Esophagus muscularis mucosa (tissue), 4 donors: ENCODE measurements at regions of chr2 and their contacts with region 1.

Region 1: DNA sequence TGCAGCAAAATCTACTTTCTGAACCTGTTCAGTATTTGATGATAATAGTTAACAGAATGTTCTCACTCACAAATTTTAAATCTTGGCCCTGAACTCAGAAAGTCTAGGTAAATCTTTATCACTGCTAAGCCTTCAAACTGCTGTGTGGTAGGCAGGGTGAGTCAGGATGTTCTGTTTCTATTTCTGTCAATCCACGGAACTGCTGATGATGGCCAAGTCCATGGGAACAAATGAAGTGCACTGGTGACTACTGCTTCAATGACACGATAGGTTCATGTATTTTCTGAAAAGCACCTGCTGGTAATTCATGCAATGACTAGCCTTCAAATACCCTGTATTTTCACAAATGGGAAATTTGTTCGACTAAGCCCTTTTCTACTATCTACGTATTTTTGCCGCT is 14.2 kb downstream of the NIFK start:
- DNase-seq: no peak
- H3K4me3 ChIP-seq: no peak overlapping the region
- H3K27ac ChIP-seq: no peak overlapping the region
- H3K4me1 ChIP-seq: peaks cover 2 to 10% (median 8%) of the 10 kb centered on the region in 4 donors
- H3K27me3 ChIP-seq: no peaks in the 10 kb centered on the region
- CTCF ChIP-seq: no peak
- EP300 ChIP-seq: no peak
- POLR2A ChIP-seq: no peak

Region 2: DNA sequence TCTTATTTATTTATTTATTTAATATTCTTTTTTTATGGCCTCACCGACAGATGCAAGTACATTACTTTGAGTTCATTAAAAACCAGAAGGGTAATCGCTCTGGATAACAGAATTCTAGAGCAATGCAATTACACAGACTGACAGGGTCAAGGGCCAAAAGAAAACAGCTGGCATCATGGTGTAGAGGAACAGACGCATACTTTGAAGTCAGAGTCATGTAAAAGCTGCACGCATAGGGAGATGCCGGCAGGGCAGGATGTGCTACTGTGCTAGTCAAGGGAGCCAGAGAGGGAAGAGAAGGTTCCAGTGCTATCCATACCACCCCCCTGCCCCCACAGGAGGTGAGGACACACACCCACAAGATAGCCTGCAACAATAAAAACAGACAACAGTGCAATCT is 322.3 kb before region 1 on chr2:
- intact Hi-C with region 1: loop called (anchors 2 kb)
- DNase-seq: no peak
- H3K4me3 ChIP-seq: no peak overlapping the region
- H3K27ac ChIP-seq: no peak overlapping the region
- H3K4me1 ChIP-seq: no peaks in the 10 kb centered on the region
- H3K27me3 ChIP-seq: no peaks in the 10 kb centered on the region
- CTCF ChIP-seq: no peak
- EP300 ChIP-seq: no peak
- POLR2A ChIP-seq: no peak

Region 3: DNA sequence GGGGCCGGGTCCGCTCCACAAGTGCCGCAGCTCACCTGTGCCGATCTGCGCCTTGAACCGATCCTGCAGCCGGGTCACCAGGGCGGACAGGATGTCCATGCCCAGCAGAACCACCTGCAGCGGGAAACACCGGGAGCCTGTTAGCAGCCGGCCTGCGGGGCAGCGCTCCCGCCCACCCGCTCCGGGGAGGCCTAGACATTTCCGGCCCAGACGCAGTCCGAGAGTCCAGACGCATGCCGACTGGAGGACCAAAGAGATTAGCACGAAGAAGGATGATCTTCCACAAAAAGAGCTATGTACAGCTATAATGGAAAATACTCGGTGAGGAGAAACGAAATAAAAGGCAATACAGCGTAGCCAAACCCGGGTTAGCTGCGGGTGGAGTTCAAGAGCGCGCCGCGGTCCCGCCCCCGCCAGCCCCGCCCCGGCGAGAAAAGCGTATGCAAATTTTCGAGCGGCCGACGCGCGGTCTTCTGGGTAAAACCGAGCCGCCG is 192.2 kb before region 1 on chr2:
- intact Hi-C with region 1: loop called (anchors 5 kb)
- DNase-seq: peak; percentile 97
- H3K4me3 ChIP-seq: peak overlapping the region; percentile 69 to 86 (median 79)
- H3K27ac ChIP-seq: peak overlapping the region; percentile 91 to 95 (median 94)
- H3K4me1 ChIP-seq: peaks cover 48 to 76% (median 67%) of the 10 kb centered on the region in 4 donors
- H3K27me3 ChIP-seq: no peaks in the 10 kb centered on the region
- CTCF ChIP-seq: no peak
- EP300 ChIP-seq: no peak
- POLR2A ChIP-seq: no peak

Region 4: GRCh38 chr2:121596221-121597080 is 126.0 kb before region 1 on chr2:
- intact Hi-C with region 1: loop called (anchors 5 kb)
- DNase-seq: no peak
- H3K4me3 ChIP-seq: peak overlapping the region in 3 of 4 donors; percentile 15 to 35 (median 25)
- H3K27ac ChIP-seq: peak overlapping the region; percentile 41 to 65 (median 54)
- H3K4me1 ChIP-seq: peaks cover 19 to 36% (median 33%) of the 10 kb centered on the region in 4 donors
- H3K27me3 ChIP-seq: no peaks in the 10 kb centered on the region
- CTCF ChIP-seq: peak; percentile 35 to 49 (median 40)
- EP300 ChIP-seq: no peak
- POLR2A ChIP-seq: no peak

Region 5: DNA sequence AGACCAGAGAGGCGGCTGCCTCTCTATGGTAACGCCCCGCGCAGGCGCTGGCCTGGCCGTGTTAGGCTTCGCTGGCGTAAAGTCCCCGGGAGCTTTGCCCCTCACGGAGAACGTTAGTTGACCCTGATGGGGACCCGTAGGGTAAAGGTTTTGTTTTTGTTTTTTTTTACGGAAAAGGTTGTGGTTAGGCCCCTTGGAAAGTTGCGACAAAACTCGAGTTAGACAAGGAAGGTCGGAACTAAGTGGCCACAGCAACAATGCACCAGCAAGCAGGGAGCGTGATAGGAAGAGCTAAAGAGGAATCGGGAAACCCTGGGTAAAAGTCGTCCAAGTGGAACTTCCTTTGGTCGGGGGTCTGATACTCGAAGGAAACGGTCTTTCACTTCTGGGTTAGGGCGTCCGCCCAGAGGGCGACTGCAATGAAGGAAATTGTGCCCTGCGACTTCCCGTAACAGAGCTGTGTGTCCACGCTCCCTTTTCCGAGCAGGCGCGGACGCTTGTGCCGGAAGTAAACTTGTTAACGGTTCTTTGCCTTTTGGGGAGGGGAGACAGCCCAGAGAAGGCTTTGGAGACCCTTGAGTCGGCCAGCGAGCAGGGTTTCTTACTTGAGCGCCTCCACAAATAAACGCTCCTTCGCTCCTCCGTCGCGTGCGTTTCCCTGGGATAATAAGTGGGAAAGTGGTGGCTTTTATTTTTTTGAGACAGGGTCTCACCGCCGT is 72.7 kb before region 1 on chr2:
- intact Hi-C with region 1: loop called (anchors 5 kb)
- DNase-seq: peak; percentile 97
- H3K4me3 ChIP-seq: peak overlapping the region; percentile 75 to 94 (median 83)
- H3K27ac ChIP-seq: peak overlapping the region; percentile 88 to 97 (median 95)
- H3K4me1 ChIP-seq: peaks cover 43 to 64% (median 55%) of the 10 kb centered on the region in 4 donors
- H3K27me3 ChIP-seq: no peaks in the 10 kb centered on the region
- CTCF ChIP-seq: peak in 1 of 3 experiments; percentile 1
- EP300 ChIP-seq: peak; percentile 10
- POLR2A ChIP-seq: no peak

Region 6: GRCh38 chr2:121831841-121832240 is 109.4 kb after region 1 on chr2:
- intact Hi-C with region 1: no loop called
- DNase-seq: no peak
- H3K4me3 ChIP-seq: no peak overlapping the region
- H3K27ac ChIP-seq: no peak overlapping the region
- H3K4me1 ChIP-seq: peaks cover 3 to 27% (median 9%) of the 10 kb centered on the region in 4 donors
- H3K27me3 ChIP-seq: no peaks in the 10 kb centered on the region
- CTCF ChIP-seq: no peak
- EP300 ChIP-seq: no peak
- POLR2A ChIP-seq: no peak